H1 (cell line): ENCODE measurements at regions of chr6 and their contacts with region 1.

Region 1: GRCh38 chr6:90403489-90404381 is 107.1 kb upstream of the BACH2 start:
- DNase-seq: peak in 1 of 2 experiments; percentile 54
- H3K4me3 ChIP-seq: no peak overlapping the region
- H3K27ac ChIP-seq: no peak overlapping the region
- H3K4me1 ChIP-seq: peaks cover 0 to 10% (median 7%) of the 10 kb centered on the region in 4 experiments; a peak in 6 of 7 replicates
- H3K27me3 ChIP-seq: no peaks in the 10 kb centered on the region
- CTCF ChIP-seq: no peak
- EP300 ChIP-seq: no peak
- POLR2A ChIP-seq: no peak
- RAD21 ChIP-seq: no peak

Region 2: GRCh38 chr6:90285611-90286381 is 117.9 kb before region 1 on chr6:
- CTCF ChIA-PET with region 1: interaction called, 61 read pairs
- POLR2A ChIA-PET with region 1: interaction called, 3 read pairs
- DNase-seq: no peak
- H3K4me3 ChIP-seq: no peak overlapping the region
- H3K27ac ChIP-seq: no peak overlapping the region
- H3K4me1 ChIP-seq: peaks cover 7 to 19% (median 12%) of the 10 kb centered on the region in 4 experiments; a peak in 6 of 7 replicates
- H3K27me3 ChIP-seq: no peaks in the 10 kb centered on the region
- CTCF ChIP-seq: no peak
- EP300 ChIP-seq: peak in 1 of 2 experiments; percentile 40; a peak in 1 of 3 replicates
- POLR2A ChIP-seq: no peak
- RAD21 ChIP-seq: 0 out of 4 replicates have a peak, but pooled peaks of 1 of the 2 experiments have one; percentile 20

Region 3: DNA sequence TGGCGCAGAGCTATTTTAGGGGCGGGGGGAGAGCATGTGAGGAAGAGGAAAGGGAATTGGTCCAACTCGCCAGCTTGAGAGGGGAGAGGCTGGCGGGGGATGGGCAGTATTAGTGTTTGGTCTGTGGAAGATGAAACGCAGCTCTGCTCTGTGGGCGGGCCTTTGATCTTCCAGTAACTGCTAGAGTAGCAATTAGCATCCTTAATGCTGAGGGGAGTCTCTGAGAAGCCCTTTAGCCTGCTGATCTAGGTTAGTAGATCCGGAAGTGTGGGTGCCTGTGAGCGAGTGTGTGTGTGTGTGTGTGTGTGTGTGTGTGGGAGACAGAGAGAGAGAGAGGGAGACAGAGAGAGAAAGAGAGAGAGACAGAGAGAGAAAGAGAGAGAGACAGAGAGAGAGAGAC is 10.1 kb after region 1 on chr6:
- CTCF ChIA-PET with region 1: interaction called, 17 read pairs
- POLR2A ChIA-PET with region 1: no interaction called
- DNase-seq: peak in 1 of 2 experiments; percentile 58
- H3K4me3 ChIP-seq: peak overlapping the region in 1 of 4 experiments; percentile 5; a peak in 1 of 8 replicates
- H3K27ac ChIP-seq: no peak overlapping the region
- H3K4me1 ChIP-seq: peaks cover 0 to 12% (median 7%) of the 10 kb centered on the region in 4 experiments; a peak in 5 of 7 replicates
- H3K27me3 ChIP-seq: no peaks in the 10 kb centered on the region
- CTCF ChIP-seq: no peak
- EP300 ChIP-seq: no peak
- POLR2A ChIP-seq: no peak
- RAD21 ChIP-seq: no peak

Region 4: GRCh38 chr6:90434094-90434493 is 30.4 kb after region 1 on chr6:
- CTCF ChIA-PET with region 1: interaction called, 12 read pairs
- POLR2A ChIA-PET with region 1: no interaction called
- DNase-seq: no peak
- H3K4me3 ChIP-seq: no peak overlapping the region
- H3K27ac ChIP-seq: no peak overlapping the region
- H3K4me1 ChIP-seq: peaks cover 0 to 20% (median 15%) of the 10 kb centered on the region in 4 experiments; a peak in 4 of 7 replicates
- H3K27me3 ChIP-seq: no peaks in the 10 kb centered on the region; a peak in 1 of 7 replicates
- CTCF ChIP-seq: peak; percentile 57 to 81 (median 78)
- EP300 ChIP-seq: no peak
- POLR2A ChIP-seq: no peak
- RAD21 ChIP-seq: peak; percentile 90 to 91